Naive thymus-derived CD4-positive, alpha-beta T cell (primary cell): ENCODE measurements at regions of chr3 and their contacts with region 1.

Region 1: GRCh38 chr3:45656575-45657363 is 32.4 kb upstream of the SACM1L start:
- DNase-seq: peak; percentile 65 to 83 (median 78)
- ATAC-seq: peak; percentile 94
- H3K4me3 ChIP-seq: no peak overlapping the region
- H3K4me3 Mint-ChIP-seq: no peak overlapping the region
- H3K27ac ChIP-seq: no peak overlapping the region
- H3K27ac Mint-ChIP-seq: peak overlapping the region in 1 of 9 donors; percentile 30
- H3K4me1 ChIP-seq: no peaks in the 10 kb centered on the region
- H3K4me1 Mint-ChIP-seq: peaks cover 6 to 27% (median 18%) of the 10 kb centered on the region in 7 donors
- H3K27me3 ChIP-seq: no peaks in the 10 kb centered on the region
- H3K27me3 Mint-ChIP-seq: no peaks in the 10 kb centered on the region

Region 2: DNA sequence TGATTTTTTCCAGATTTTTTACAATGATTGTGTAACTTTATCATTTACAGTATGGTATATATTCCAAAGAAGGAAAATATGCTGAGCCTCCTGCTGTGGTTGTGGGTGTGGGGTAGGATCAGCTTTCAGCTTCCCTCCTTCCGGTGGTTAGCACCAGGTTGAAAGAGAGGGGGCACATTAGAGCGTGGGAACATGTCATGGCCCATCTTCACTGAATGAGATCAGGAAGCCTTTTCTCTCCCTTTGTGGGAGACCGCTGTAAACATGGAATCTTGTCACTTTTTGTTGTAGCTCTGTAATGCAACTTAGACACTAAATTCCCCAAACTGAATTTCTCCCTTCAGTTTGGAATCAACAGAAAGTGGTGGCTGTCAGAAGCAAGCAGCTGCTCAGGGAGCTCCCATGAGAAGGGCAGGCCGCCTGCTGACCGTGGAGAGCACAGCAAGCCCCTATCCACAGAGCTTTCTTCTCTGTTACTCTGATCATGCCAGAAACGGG is 148.9 kb before region 1 on chr3:
- CTCF ChIA-PET with region 1: interaction called, 74 read pairs
- POLR2A ChIA-PET with region 1: interaction called, 5 read pairs
- intact Hi-C with region 1: loop called (anchors 1 kb)
- DNase-seq: peak in 3 of 9 donors; percentile 8 to 17 (median 14)
- ATAC-seq: no peak
- H3K4me3 ChIP-seq: no peak overlapping the region
- H3K4me3 Mint-ChIP-seq: no peak overlapping the region
- H3K27ac ChIP-seq: no peak overlapping the region
- H3K27ac Mint-ChIP-seq: no peak overlapping the region
- H3K4me1 ChIP-seq: peaks cover 0 to 13% of the 10 kb centered on the region in 2 donors
- H3K4me1 Mint-ChIP-seq: peaks cover 0 to 13% (median 0%) of the 10 kb centered on the region in 7 donors
- H3K27me3 ChIP-seq: no peaks in the 10 kb centered on the region
- H3K27me3 Mint-ChIP-seq: no peaks in the 10 kb centered on the region

Region 3: GRCh38 chr3:45593708-45594609 is 62.8 kb before region 1 on chr3:
- CTCF ChIA-PET with region 1: interaction called, 6 read pairs
- POLR2A ChIA-PET with region 1: interaction called, 3 read pairs
- intact Hi-C with region 1: loop called (anchors 1 kb)
- DNase-seq: peak; percentile 46 to 83 (median 70)
- ATAC-seq: peak; percentile 83
- H3K4me3 ChIP-seq: peak overlapping the region; percentile 71
- H3K4me3 Mint-ChIP-seq: peak overlapping the region; percentile 84 to 99 (median 90)
- H3K27ac ChIP-seq: peak overlapping the region; percentile 72
- H3K27ac Mint-ChIP-seq: peak overlapping the region; percentile 85 to 96 (median 91)
- H3K4me1 ChIP-seq: peaks cover 44 to 58% of the 10 kb centered on the region in 2 donors
- H3K4me1 Mint-ChIP-seq: peaks cover 48 to 61% (median 55%) of the 10 kb centered on the region in 7 donors
- H3K27me3 ChIP-seq: no peaks in the 10 kb centered on the region
- H3K27me3 Mint-ChIP-seq: peaks cover 0 to 3% (median 0%) of the 10 kb centered on the region in 5 donors

Region 4: GRCh38 chr3:45616158-45616557 is 40.6 kb before region 1 on chr3:
- CTCF ChIA-PET with region 1: no interaction called
- POLR2A ChIA-PET with region 1: no interaction called
- intact Hi-C with region 1: no loop called
- DNase-seq: no peak
- ATAC-seq: no peak
- H3K4me3 ChIP-seq: no peak overlapping the region
- H3K4me3 Mint-ChIP-seq: no peak overlapping the region
- H3K27ac ChIP-seq: no peak overlapping the region
- H3K27ac Mint-ChIP-seq: peak overlapping the region in 3 of 9 donors; percentile 30 to 40 (median 33)
- H3K4me1 ChIP-seq: peaks cover 0 to 3% of the 10 kb centered on the region in 2 donors
- H3K4me1 Mint-ChIP-seq: peaks cover 21 to 31% (median 25%) of the 10 kb centered on the region in 7 donors
- H3K27me3 ChIP-seq: no peaks in the 10 kb centered on the region
- H3K27me3 Mint-ChIP-seq: no peaks in the 10 kb centered on the region

Region 5: DNA sequence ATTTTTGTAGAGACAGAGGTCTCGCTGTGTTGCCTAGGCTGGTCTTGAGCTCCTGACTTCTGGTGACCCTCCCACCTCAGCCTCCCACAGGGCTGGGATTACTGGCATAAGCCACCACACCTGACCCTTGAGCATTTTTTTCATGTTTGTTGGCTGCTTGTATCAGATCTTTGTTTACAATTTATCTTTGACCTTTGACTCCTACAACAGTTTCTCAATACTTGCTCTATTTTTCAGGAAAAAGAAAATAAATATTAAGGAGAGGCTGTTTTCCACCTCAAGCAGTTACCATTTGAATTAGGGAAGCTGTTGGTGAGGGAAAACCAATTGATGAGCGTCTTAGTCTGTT is 17.8 kb before region 1 on chr3:
- CTCF ChIA-PET with region 1: interaction called, 10 read pairs
- POLR2A ChIA-PET with region 1: interaction called, 3 read pairs
- intact Hi-C with region 1: no loop called
- DNase-seq: no peak
- ATAC-seq: no peak
- H3K4me3 ChIP-seq: no peak overlapping the region
- H3K4me3 Mint-ChIP-seq: no peak overlapping the region
- H3K27ac ChIP-seq: no peak overlapping the region
- H3K27ac Mint-ChIP-seq: no peak overlapping the region
- H3K4me1 ChIP-seq: no peaks in the 10 kb centered on the region
- H3K4me1 Mint-ChIP-seq: peaks cover 0 to 16% (median 9%) of the 10 kb centered on the region in 7 donors
- H3K27me3 ChIP-seq: no peaks in the 10 kb centered on the region
- H3K27me3 Mint-ChIP-seq: no peaks in the 10 kb centered on the region

Region 6: GRCh38 chr3:45677033-45677433 is 20.3 kb after region 1 on chr3:
- CTCF ChIA-PET with region 1: interaction called, 18 read pairs
- POLR2A ChIA-PET with region 1: interaction called, 3 read pairs
- intact Hi-C with region 1: no loop called
- DNase-seq: peak in 8 of 9 donors; percentile 37 to 79 (median 77)
- ATAC-seq: peak; percentile 92
- H3K4me3 ChIP-seq: peak overlapping the region; percentile 55
- H3K4me3 Mint-ChIP-seq: peak overlapping the region; percentile 70 to 88 (median 82)
- H3K27ac ChIP-seq: peak overlapping the region; percentile 74
- H3K27ac Mint-ChIP-seq: peak overlapping the region; percentile 92 to 98 (median 96)
- H3K4me1 ChIP-seq: peaks cover 11 to 21% of the 10 kb centered on the region in 2 donors
- H3K4me1 Mint-ChIP-seq: peaks cover 16 to 53% (median 43%) of the 10 kb centered on the region in 7 donors
- H3K27me3 ChIP-seq: no peaks in the 10 kb centered on the region
- H3K27me3 Mint-ChIP-seq: no peaks in the 10 kb centered on the region